Dendritic cell treated with granulocyte-macrophage colony-stimulating factor and Interleukin-4, amounts not matched to agents 40 ng/mL and 50 ng/mL, for 4 days (primary cell): ENCODE measurements at regions of chr1 and their contacts with region 1.

Region 1: DNA sequence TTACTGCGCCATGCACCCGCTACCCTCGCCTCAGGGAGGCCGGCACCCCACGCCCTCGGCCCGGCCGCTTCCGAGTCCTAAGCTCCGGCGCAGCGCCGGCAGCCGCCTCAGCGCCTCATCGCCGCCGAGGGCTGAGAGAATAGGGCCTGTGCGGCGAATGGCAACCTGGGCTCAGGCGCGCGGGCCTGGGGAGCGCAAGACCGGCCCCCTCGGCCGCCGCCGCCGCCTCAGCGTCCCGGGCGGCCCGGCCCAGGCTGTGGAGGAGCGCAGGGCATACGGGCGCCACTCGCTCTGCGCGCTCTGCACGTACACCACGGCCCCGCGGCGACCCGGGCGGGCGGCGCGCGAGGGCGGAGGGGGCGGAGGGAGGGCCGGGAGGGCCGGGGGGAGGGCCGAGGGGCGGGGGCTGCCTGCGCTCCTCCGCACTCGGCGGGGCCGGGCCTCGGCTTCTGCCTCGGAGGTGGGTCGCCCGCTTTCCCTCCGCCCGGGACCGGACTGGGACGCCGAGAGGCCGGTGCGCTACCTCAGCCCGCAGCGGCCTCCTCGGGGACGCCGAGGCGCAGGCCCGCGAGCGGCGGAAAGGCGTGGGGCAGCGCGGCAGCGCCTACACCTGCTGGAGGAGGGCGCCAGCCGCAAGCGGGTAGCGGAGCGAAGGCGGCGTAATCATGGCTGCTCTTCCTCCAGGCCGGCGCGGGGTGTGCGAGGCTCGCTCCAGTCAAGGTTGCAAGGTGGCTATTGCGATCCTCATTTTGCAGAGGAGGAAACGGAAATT is at the start of gene EGLN1:
- H3K4me3 Mint-ChIP-seq: peak within 1 kb of the TSS; percentile 80
- H3K27ac Mint-ChIP-seq: peak within 1 kb of the TSS; percentile 79
- H3K4me1 Mint-ChIP-seq: peaks cover 28% of the 10 kb centered on the region
- H3K27me3 Mint-ChIP-seq: peaks cover 26% of the 10 kb centered on the region

Region 2: DNA sequence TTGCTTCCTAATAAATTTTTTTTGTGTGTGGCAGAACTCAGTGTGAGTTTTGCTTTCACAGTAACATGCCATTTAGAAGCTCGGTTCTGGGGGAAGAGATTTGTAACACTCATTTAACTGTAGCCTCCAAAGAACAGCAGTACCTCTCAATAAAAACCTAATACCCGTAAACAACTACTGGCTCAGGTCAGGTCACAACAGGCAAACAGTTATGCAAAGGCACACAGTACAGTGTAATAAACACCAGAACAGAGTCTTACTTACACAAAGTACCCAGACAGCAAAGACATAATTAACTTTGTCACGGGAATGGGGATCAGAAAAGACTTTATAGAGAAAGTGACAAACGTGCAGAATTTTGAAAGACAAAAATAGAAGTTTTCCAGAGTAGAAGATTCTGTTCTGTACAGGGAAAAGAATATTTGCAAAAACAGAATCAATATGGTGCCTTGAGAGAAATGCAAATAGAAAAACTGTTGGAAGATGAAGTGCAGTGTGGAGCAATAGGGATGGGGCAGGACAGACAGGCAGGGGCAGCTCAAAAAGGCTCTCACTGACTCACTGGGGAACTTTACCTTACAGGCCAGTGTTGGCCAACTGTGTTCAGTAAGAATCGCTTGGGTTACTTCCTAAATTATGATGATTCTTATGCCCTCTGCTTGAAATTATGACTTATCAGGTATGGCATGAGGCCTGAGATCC is 38.9 kb before region 1 on chr1:
- intact Hi-C with region 1: loop called (anchors 5 kb)
- H3K4me3 Mint-ChIP-seq: no peak overlapping the region
- H3K27ac Mint-ChIP-seq: no peak overlapping the region
- H3K4me1 Mint-ChIP-seq: peaks cover 16% of the 10 kb centered on the region
- H3K27me3 Mint-ChIP-seq: no peaks in the 10 kb centered on the region

Region 3: DNA sequence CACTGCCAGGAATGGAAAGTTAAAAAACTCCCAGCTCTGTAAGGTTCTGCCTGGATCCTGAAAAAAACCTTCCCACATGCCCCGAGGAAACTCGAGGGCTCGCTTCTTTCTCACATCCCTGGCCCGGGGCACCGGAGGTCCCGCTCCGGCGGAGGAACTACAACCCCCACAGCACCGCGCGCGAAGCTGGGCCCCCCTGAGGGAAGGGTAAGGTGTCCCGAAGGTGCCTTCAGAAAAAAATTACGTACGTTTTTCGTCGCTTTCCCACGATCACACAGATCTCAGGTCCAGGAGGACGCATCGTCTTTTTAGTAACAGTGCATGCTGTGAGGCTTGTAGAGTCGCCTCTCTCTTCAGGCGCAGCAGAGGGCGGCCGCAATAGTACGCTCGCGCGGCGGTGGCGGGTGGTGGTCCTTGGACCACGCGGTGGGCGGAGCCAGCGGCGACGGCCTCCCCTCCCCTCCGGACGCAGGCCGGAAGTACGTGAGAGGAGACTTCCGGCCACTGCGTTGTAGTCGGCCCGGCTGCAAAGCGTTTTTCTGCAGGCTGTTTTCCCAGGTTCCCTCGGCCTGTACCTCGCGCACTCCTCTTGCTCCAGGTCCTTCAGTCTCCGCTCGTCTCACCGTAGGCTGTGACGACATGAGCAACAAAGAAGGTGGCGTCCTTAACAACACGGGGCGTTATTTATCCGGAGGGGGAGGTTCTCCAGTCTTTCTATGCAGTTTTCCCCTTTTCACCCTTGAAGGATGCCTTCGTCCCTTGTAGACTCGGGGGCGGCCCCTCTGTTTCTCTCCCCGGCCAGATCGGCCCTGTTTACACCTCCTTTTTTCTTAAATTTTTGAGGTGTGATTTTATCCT is 106.2 kb after region 1 on chr1 and contains the start of gene TSNAX:
- intact Hi-C with region 1: loop called (anchors 1 kb)
- H3K4me3 Mint-ChIP-seq: peak within 1 kb of the TSS; percentile 95
- H3K27ac Mint-ChIP-seq: peak within 1 kb of the TSS; percentile 98
- H3K4me1 Mint-ChIP-seq: peaks cover 43% of the 10 kb centered on the region
- H3K27me3 Mint-ChIP-seq: no peaks in the 10 kb centered on the region